Activated naive CD8-positive, alpha-beta T cell treated with anti-CD3 and anti-CD28 coated beads, Interleukin-2, amount 10 ng/mL, durations not matched to agents 7 days and 5 days (primary cell): ENCODE measurements at regions of chr9 and their contacts with region 1.

Region 1: GRCh38 chr9:128420060-128420650 is 502 bp upstream of the CERCAM start:
- DNase-seq: peak; percentile 85
- ATAC-seq: peak; percentile 76
- H3K4me3 Mint-ChIP-seq: peak overlapping the region; percentile 76
- H3K27ac Mint-ChIP-seq: no peak overlapping the region
- H3K4me1 Mint-ChIP-seq: peaks cover 16% of the 10 kb centered on the region
- H3K27me3 Mint-ChIP-seq: peaks cover 45% of the 10 kb centered on the region

Region 2: DNA sequence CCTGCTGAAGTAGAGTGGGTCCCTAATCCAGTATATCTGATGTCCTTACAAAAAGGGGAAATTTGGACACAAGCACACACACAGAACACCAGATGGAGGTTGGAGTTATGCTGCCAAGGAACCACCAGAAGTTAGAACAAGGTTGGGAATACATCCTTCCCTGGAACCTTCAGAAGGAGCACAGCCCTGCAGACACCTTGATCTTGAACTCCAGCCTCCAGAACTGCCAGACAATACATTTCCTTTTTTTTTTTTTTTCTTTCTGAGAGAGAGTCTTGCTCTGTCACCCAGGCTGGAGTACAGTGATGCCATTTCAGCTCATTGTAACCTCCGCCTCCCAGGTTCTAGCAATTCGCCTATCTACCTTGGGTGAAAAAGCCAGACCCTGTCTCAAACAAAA is 28.6 kb after region 1 on chr9:
- POLR2A ChIA-PET with region 1: interaction called, 11 read pairs
- DNase-seq: no peak
- ATAC-seq: no peak
- H3K4me3 Mint-ChIP-seq: no peak overlapping the region
- H3K27ac Mint-ChIP-seq: no peak overlapping the region
- H3K4me1 Mint-ChIP-seq: no peaks in the 10 kb centered on the region
- H3K27me3 Mint-ChIP-seq: no peaks in the 10 kb centered on the region